ENCODE measurements at regions of chr1 and their contacts with region 1.

Region 1: GRCh38 chr1:65235867-65236805 is 73.2 kb upstream of the DNAJC6 start:
- DNase-seq: no peak
- ATAC-seq: peak; percentile 56
- H3K4me3 ChIP-seq: no peak overlapping the region
- H3K27ac ChIP-seq: no peak overlapping the region
- H3K4me1 ChIP-seq: no peaks in the 10 kb centered on the region
- H3K27me3 ChIP-seq: no peaks in the 10 kb centered on the region
- CTCF ChIP-seq: peak; percentile 32 to 36

Region 2: GRCh38 chr1:65687428-65688214 is 451.5 kb after region 1 on chr1:
- intact Hi-C with region 1: loop called in 1 of 2 experiments (anchors 5 kb)
- DNase-seq: peak; percentile 76 to 86 (median 82)
- ATAC-seq: peak; percentile 98
- H3K4me3 ChIP-seq: no peak overlapping the region
- H3K27ac ChIP-seq: no peak overlapping the region
- H3K4me1 ChIP-seq: peaks cover 17 to 26% of the 10 kb centered on the region in 2 donors
- H3K27me3 ChIP-seq: no peaks in the 10 kb centered on the region
- CTCF ChIP-seq: peak; percentile 96 to 98